Endothelial cell of umbilical vein (primary cell): ENCODE measurements at regions of chr4 and their contacts with region 1.

Region 1: DNA sequence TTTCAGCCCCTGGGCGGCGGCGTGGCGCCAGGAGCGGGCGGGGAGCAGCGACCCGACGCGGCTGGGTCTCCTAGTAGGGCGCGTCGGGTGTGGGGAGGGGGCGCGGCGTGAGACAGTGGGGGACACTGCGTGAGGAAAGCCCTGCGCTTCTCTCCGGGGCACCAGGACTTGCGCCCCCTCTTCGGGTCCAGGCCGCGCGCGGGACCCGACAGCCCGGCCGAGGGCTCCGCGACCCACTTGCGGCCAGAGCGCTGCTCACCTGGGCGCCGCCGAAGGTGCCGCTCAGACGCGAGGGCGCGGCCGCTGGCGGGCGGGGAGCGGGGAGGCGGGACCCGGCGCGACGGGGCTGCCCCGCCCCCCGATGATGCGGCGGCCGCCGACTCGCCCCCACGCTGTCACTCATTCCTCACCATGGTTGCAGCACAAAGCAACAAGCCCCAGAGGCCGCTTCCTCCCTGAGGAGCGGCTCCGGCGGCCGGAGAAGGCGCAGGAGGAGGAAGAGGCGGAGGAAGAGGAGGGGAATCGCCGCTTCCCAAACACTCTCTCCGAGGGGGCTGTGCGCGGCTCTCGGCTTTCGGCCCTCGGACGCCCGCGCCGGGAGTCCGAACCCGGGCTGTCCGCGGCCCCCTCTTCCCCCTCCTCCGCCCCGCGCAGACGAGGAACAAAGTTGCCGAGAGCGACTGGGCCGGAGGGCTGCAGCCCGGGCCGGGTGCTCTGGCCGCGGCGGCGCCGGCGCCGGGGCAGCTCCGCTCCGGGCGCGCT is at the start of gene RAPGEF2:
- DNase-seq: peak; percentile 93
- H3K4me3 ChIP-seq: peak within 1 kb of the TSS; percentile 62 to 97 (median 95)
- H3K27ac ChIP-seq: peak within 1 kb of the TSS; percentile 96
- H3K4me1 ChIP-seq: peaks cover 29% of the 10 kb centered on the region
- H3K27me3 ChIP-seq: no peaks in the 10 kb centered on the region
- CTCF ChIP-seq: no peak
- POLR2A ChIP-seq: peak; percentile 59
- total RNA-seq, gene RAPGEF2: 55.2 and 61.6 TPM in 2 replicates

Region 2: GRCh38 chr4:158671915-158672806 is 430.6 kb before region 1 on chr4 and contains the start of gene ETFDH:
- CTCF ChIA-PET with region 1: no interaction called
- POLR2A ChIA-PET with region 1: no interaction called
- dilution Hi-C with region 1: no loop called
- intact Hi-C with region 1: loop called (anchors 1 kb)
- DNase-seq: peak; percentile 100
- H3K4me3 ChIP-seq: peak within 1 kb of the TSS; percentile 83 to 92 (median 84)
- H3K27ac ChIP-seq: peak within 1 kb of the TSS; percentile 71
- H3K4me1 ChIP-seq: peaks cover 11% of the 10 kb centered on the region
- H3K27me3 ChIP-seq: no peaks in the 10 kb centered on the region
- CTCF ChIP-seq: peak; percentile 75 to 80
- POLR2A ChIP-seq: no peak
- total RNA-seq, gene ETFDH: 21.8 and 22.3 TPM in 2 replicates

Region 3: GRCh38 chr4:158809611-158810486 is 293.0 kb before region 1 on chr4:
- CTCF ChIA-PET with region 1: no interaction called
- POLR2A ChIA-PET with region 1: no interaction called
- dilution Hi-C with region 1: no loop called
- intact Hi-C with region 1: loop called (anchors 1 kb)
- DNase-seq: peak; percentile 92
- H3K4me3 ChIP-seq: peak overlapping the region in 1 of 3 experiments; percentile 48
- H3K27ac ChIP-seq: peak overlapping the region; percentile 95
- H3K4me1 ChIP-seq: peaks cover 23% of the 10 kb centered on the region
- H3K27me3 ChIP-seq: no peaks in the 10 kb centered on the region
- CTCF ChIP-seq: no peak
- POLR2A ChIP-seq: no peak

Region 4: GRCh38 chr4:158895797-158896576 is 206.8 kb before region 1 on chr4:
- CTCF ChIA-PET with region 1: no interaction called
- POLR2A ChIA-PET with region 1: no interaction called
- dilution Hi-C with region 1: no loop called
- intact Hi-C with region 1: loop called (anchors 1 kb)
- DNase-seq: peak; percentile 49
- H3K4me3 ChIP-seq: peak overlapping the region in 1 of 3 experiments; percentile 1
- H3K27ac ChIP-seq: peak overlapping the region; percentile 56
- H3K4me1 ChIP-seq: peaks cover 11% of the 10 kb centered on the region
- H3K27me3 ChIP-seq: no peaks in the 10 kb centered on the region
- CTCF ChIP-seq: peak in 1 of 2 donors; percentile 15
- POLR2A ChIP-seq: no peak

Region 5: GRCh38 chr4:159117968-159118367 is 15.2 kb after region 1 on chr4:
- CTCF ChIA-PET with region 1: interaction called, 5 read pairs
- POLR2A ChIA-PET with region 1: no interaction called
- dilution Hi-C with region 1: no loop called
- intact Hi-C with region 1: loop called (anchors 1 kb)
- DNase-seq: no peak
- H3K4me3 ChIP-seq: no peak overlapping the region
- H3K27ac ChIP-seq: no peak overlapping the region
- H3K4me1 ChIP-seq: no peaks in the 10 kb centered on the region
- H3K27me3 ChIP-seq: no peaks in the 10 kb centered on the region
- CTCF ChIP-seq: no peak
- POLR2A ChIP-seq: no peak

Region 6: DNA sequence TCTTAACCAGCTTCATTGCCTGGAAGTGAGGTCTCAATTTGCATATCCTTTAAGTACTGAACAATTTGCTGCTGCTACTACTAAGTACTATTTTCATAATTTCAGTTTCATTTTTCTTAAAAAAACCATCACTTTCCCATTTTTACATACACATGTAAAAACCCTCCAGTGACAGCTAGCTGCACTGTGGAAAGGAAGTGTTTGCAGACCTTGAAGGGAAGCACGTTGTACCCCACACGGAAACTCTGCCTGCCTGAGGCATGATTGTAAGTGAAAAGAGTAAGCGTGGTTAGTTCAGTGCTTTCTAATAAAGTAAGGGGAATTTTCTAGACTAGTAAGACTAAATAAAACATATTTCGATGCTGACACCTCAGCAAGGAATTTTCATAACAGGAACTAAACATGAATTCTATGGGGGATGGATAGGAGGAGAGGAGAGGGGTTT is 103.6 kb after region 1 on chr4:
- CTCF ChIA-PET with region 1: interaction called, 7 read pairs
- POLR2A ChIA-PET with region 1: no interaction called
- dilution Hi-C with region 1: no loop called
- intact Hi-C with region 1: loop called (anchors 1 kb)
- DNase-seq: peak; percentile 73
- H3K4me3 ChIP-seq: no peak overlapping the region
- H3K27ac ChIP-seq: no peak overlapping the region
- H3K4me1 ChIP-seq: peaks cover 27% of the 10 kb centered on the region
- H3K27me3 ChIP-seq: no peaks in the 10 kb centered on the region
- CTCF ChIP-seq: no peak
- POLR2A ChIP-seq: no peak